ENCODE measurements at regions of chr1 and their contacts with region 1.

Region 1: GRCh38 chr1:101288491-101288944 is 51.7 kb downstream of the S1PR1 start:
- DNase-seq: peak; percentile 80
- ATAC-seq: peak; percentile 31
- H3K4me3 Mint-ChIP-seq: no peak overlapping the region
- H3K27ac Mint-ChIP-seq: peak overlapping the region; percentile 58
- H3K4me1 Mint-ChIP-seq: peaks cover 92% of the 10 kb centered on the region
- H3K27me3 Mint-ChIP-seq: no peaks in the 10 kb centered on the region

Region 2: GRCh38 chr1:100443811-100444571 is 844.5 kb before region 1 on chr1:
- CTCF ChIA-PET with region 1: no interaction called
- POLR2A ChIA-PET with region 1: no interaction called
- intact Hi-C with region 1: loop called (anchors 10 kb)
- DNase-seq: peak; percentile 49
- ATAC-seq: peak; percentile 79
- H3K4me3 Mint-ChIP-seq: peak overlapping the region; percentile 68
- H3K27ac Mint-ChIP-seq: peak overlapping the region; percentile 93
- H3K4me1 Mint-ChIP-seq: peaks cover 84% of the 10 kb centered on the region
- H3K27me3 Mint-ChIP-seq: no peaks in the 10 kb centered on the region

Region 3: DNA sequence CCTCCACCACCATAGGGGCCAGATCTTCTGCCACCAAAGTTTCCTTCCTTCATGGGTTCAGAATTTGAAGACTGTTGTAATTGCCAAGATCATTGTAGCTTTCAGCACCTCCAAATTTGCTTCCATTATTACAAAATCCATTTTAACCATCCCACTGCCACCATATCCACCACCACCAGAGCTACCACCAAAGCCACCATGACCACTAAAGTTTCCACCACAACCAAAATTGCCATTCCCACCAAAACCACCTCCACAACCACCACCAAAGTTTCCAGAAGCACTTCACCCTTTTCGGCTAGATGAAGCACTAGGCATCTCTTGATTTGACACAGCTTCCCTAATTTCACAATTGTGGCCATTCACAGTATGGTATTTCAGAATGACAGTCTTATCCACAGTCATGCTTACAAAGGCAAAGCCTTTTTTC is 347.4 kb before region 1 on chr1:
- CTCF ChIA-PET with region 1: interaction called, 3 read pairs
- POLR2A ChIA-PET with region 1: interaction called, 3 read pairs
- intact Hi-C with region 1: loop called in 1 of 2 experiments (anchors 1 kb)
- DNase-seq: peak; percentile 45
- ATAC-seq: peak; percentile 82
- H3K4me3 Mint-ChIP-seq: peak overlapping the region; percentile 67
- H3K27ac Mint-ChIP-seq: peak overlapping the region; percentile 94
- H3K4me1 Mint-ChIP-seq: peaks cover 45% of the 10 kb centered on the region
- H3K27me3 Mint-ChIP-seq: peaks cover 2% of the 10 kb centered on the region

Region 4: DNA sequence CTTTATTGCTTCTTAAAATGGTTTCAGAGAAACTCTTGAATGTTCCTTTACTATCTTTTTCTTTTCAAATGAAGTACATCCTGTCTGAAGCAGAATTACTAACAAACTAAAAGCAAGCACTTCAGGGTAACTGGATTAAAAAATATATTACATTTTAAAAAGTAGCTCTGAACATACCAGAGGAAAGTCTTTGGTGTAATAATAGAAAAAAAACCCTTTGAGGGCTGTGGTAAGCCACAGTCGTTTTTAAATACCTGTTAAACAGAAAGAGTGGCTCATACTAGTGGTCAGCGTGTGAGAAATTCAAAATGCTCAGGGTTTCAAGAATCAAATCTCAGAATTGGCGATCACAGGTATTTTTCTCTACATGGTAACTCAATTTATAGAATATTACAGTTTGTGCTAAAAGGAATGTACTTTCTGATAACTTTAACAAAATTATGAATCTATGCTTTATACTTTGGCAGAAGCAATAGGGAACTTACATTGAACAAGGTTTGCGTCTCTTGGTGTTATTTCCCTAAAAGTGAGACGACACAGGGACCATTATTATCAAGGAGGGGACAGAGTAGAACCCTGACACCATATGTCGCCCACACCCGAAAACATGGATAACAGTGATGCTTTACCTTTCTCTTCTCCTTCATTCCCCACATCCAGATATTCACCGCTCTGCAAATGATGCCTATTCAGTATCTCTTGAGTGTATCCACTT is 165.9 kb before region 1 on chr1:
- CTCF ChIA-PET with region 1: interaction called, 8 read pairs
- POLR2A ChIA-PET with region 1: no interaction called
- intact Hi-C with region 1: loop called in 1 of 2 experiments (anchors 5 kb)
- DNase-seq: peak; percentile 29
- ATAC-seq: peak; percentile 72
- H3K4me3 Mint-ChIP-seq: peak overlapping the region; percentile 19
- H3K27ac Mint-ChIP-seq: peak overlapping the region; percentile 30
- H3K4me1 Mint-ChIP-seq: peaks cover 49% of the 10 kb centered on the region
- H3K27me3 Mint-ChIP-seq: no peaks in the 10 kb centered on the region

Region 5: DNA sequence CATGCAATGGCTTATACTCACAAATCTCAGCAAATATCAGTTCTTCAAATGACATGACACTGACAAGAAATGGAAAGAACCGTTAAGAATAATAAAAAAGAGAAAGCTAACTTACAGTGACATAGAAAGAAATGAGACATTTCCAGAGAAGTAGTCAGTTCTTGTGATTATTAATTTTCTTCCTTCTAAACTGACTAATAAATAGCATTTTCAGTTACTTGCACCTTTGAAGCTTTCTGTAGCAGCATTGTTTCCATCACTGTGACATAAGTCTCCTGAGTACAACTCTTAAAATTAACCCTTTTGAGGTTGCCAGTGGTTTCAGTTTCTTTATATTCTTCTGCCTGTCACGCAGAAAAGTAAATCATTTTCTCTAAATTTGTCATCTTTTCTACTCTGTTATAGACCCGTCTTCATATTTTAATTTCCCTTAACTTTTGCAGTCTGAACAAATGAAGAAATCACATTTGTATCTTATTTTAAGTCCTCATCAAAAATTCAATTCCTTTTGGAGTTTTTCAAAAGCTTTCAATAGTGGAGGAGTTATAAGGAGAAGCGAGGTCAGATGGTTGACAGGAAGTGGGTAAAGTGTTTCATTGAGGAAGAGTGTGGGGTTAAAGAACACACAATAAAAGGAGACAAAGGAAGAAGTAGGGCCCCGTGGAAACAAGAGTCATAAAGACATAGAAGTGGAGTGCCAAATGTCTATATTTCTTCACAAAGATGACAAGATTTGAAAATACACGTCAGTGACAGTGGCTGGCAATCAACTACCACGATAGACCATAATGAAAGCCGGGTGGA is 109.6 kb before region 1 on chr1:
- CTCF ChIA-PET with region 1: interaction called, 24 read pairs
- POLR2A ChIA-PET with region 1: interaction called, 9 read pairs
- intact Hi-C with region 1: loop called (anchors 1 kb)
- DNase-seq: peak; percentile 65
- ATAC-seq: peak; percentile 69
- H3K4me3 Mint-ChIP-seq: peak overlapping the region; percentile 71
- H3K27ac Mint-ChIP-seq: peak overlapping the region; percentile 99
- H3K4me1 Mint-ChIP-seq: peaks cover 87% of the 10 kb centered on the region
- H3K27me3 Mint-ChIP-seq: no peaks in the 10 kb centered on the region

Region 6: GRCh38 chr1:101247404-101248287 is 40.9 kb before region 1 on chr1:
- CTCF ChIA-PET with region 1: interaction called, 20 read pairs
- POLR2A ChIA-PET with region 1: interaction called, 4 read pairs
- intact Hi-C with region 1: no loop called
- DNase-seq: no peak
- ATAC-seq: peak; percentile 3
- H3K4me3 Mint-ChIP-seq: no peak overlapping the region
- H3K27ac Mint-ChIP-seq: no peak overlapping the region
- H3K4me1 Mint-ChIP-seq: peaks cover 66% of the 10 kb centered on the region
- H3K27me3 Mint-ChIP-seq: no peaks in the 10 kb centered on the region

Region 7: GRCh38 chr1:101357444-101357986 is 69.0 kb after region 1 on chr1:
- CTCF ChIA-PET with region 1: interaction called, 13 read pairs
- POLR2A ChIA-PET with region 1: no interaction called
- intact Hi-C with region 1: no loop called
- DNase-seq: peak; percentile 76
- ATAC-seq: peak; percentile 100
- H3K4me3 Mint-ChIP-seq: no peak overlapping the region
- H3K27ac Mint-ChIP-seq: no peak overlapping the region
- H3K4me1 Mint-ChIP-seq: peaks cover 8% of the 10 kb centered on the region
- H3K27me3 Mint-ChIP-seq: no peaks in the 10 kb centered on the region